ENCODE measurements at regions of chr1 and their contacts with region 1.

Region 1: GRCh38 chr1:31151402-31151801 is 85.9 kb upstream of the PUM1 start:
- DNase-seq: no peak
- ATAC-seq: no peak
- H3K4me3 ChIP-seq: no peak overlapping the region
- H3K4me3 Mint-ChIP-seq: no peak overlapping the region
- H3K27ac ChIP-seq: no peak overlapping the region
- H3K27ac Mint-ChIP-seq: no peak overlapping the region
- H3K4me1 ChIP-seq: peaks cover 5 to 15% of the 10 kb centered on the region in 2 experiments
- H3K4me1 Mint-ChIP-seq: peaks cover 7 to 13% (median 12%) of the 10 kb centered on the region in 3 donors
- H3K27me3 ChIP-seq: no peaks in the 10 kb centered on the region
- H3K27me3 Mint-ChIP-seq: no peaks in the 10 kb centered on the region

Region 2: GRCh38 chr1:31027693-31028526 is 123.5 kb before region 1 on chr1:
- CTCF ChIA-PET with region 1: no interaction called
- POLR2A ChIA-PET with region 1: interaction called in 1 of 2 experiments, 11 read pairs
- DNase-seq: no peak
- ATAC-seq: no peak
- H3K4me3 ChIP-seq: no peak overlapping the region
- H3K4me3 Mint-ChIP-seq: no peak overlapping the region
- H3K27ac ChIP-seq: no peak overlapping the region
- H3K27ac Mint-ChIP-seq: peak overlapping the region in 1 of 2 donors; percentile 46
- H3K4me1 ChIP-seq: peaks cover 8 to 25% of the 10 kb centered on the region in 2 experiments
- H3K4me1 Mint-ChIP-seq: peaks cover 79 to 83% (median 83%) of the 10 kb centered on the region in 3 donors
- H3K27me3 ChIP-seq: no peaks in the 10 kb centered on the region
- H3K27me3 Mint-ChIP-seq: no peaks in the 10 kb centered on the region

Region 3: DNA sequence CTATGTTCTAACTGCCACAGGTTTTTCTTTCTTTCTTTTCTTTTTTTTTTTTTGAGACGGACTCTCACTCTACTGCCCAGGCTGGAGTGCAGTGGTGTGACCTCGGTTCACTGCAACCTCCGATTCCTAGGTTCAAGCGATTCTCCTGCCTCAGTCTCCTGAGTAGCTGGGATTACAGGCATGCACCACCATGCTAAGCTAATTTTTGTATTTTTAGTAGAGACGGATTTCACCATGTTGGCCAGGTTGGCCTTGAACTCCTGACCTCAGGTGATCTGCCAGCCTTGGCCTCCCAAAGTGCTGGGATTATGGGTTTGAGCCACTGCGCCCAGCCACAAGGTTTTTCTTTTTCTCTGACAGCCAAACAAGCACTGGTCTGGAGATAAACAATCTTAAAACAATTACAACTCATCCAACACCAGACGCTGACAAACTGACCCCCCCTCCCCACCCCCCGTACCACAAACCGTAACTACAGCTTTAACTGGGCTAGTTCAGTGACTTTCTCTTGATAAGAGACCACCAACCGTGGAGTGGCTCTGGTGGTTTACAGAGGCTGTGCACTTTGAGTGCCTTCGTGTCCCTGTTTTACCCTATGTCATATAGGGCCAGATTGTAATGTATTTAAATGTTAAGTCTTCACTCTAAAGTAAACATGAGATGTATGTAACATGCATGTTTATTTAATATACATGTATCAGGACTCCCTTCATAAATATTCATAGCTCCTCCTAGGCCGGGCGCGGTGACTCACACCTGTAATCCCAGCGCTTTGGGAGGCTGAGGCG is 66.4 kb before region 1 on chr1:
- CTCF ChIA-PET with region 1: no interaction called
- POLR2A ChIA-PET with region 1: no interaction called
- DNase-seq: no peak
- ATAC-seq: no peak
- H3K4me3 ChIP-seq: no peak overlapping the region
- H3K4me3 Mint-ChIP-seq: no peak overlapping the region
- H3K27ac ChIP-seq: no peak overlapping the region
- H3K27ac Mint-ChIP-seq: no peak overlapping the region
- H3K4me1 ChIP-seq: no peaks in the 10 kb centered on the region
- H3K4me1 Mint-ChIP-seq: no peaks in the 10 kb centered on the region
- H3K27me3 ChIP-seq: peaks cover 0 to 5% of the 10 kb centered on the region in 2 experiments
- H3K27me3 Mint-ChIP-seq: no peaks in the 10 kb centered on the region

Region 4: DNA sequence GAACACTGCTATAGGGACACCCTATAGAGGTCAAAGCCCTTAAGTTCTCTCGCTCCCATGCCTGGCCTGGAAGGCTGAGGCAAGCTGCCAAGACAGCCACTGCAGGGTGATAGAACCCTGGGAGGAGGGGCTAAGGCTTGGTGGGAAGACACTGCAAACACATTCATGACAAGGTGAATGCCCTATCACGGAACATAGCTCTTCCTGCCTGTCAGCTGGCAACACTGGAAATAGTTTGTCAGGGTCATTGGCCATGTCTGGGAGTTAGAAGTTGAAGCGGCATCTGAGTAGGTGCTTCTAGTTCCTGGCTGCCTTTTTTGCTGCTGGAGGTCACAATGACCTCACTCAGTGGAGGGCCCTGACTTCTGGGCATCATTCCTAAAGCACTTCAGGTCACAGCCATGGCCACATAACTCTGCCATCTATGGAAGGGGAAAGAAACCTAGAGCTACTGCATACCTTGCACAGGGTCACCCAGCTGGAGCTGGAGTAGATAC is 217.3 kb after region 1 on chr1:
- CTCF ChIA-PET with region 1: no interaction called
- POLR2A ChIA-PET with region 1: no interaction called
- DNase-seq: no peak
- ATAC-seq: no peak
- H3K4me3 ChIP-seq: no peak overlapping the region
- H3K4me3 Mint-ChIP-seq: no peak overlapping the region
- H3K27ac ChIP-seq: no peak overlapping the region
- H3K27ac Mint-ChIP-seq: no peak overlapping the region
- H3K4me1 ChIP-seq: peaks cover 0 to 11% of the 10 kb centered on the region in 2 experiments
- H3K4me1 Mint-ChIP-seq: peaks cover 10 to 15% (median 14%) of the 10 kb centered on the region in 3 donors
- H3K27me3 ChIP-seq: peaks cover 0 to 11% of the 10 kb centered on the region in 2 experiments
- H3K27me3 Mint-ChIP-seq: peaks cover 0 to 2% of the 10 kb centered on the region in 2 donors

Region 5: DNA sequence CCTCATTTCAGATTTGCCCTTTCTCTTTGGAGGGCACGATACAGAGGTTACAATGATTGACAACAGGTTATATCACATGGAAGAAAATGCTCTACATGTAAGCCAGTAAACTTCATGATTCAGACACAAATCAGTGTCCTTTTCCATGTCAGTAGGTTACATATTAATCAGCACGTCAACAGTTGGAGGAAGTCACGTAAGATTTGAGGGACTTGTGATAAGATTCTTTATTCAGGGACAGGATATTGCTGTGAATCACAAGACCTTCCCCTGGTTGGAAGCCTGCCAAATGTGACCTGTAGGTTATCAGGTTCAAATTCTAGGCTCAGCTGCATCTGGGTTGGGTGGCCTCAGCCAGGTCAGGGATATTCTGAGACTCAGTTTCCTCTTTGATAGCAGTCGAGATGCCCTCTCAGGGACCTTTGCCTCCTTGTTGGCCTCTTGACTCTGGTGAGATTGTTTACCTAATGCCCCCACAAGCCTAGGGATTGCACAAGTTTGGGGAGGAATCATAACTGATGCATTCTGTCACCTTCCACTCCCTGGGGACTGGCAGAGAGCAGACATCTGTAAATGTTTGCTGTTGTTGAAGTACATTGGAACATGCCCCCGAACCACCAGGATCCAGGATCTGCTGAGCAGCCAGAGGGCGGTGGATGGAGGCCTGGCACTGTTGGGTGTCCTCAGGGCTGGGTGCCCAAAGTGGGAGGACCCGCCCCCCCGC is 293.5 kb after region 1 on chr1:
- CTCF ChIA-PET with region 1: no interaction called
- POLR2A ChIA-PET with region 1: no interaction called
- DNase-seq: no peak
- ATAC-seq: no peak
- H3K4me3 ChIP-seq: no peak overlapping the region
- H3K4me3 Mint-ChIP-seq: no peak overlapping the region
- H3K27ac ChIP-seq: no peak overlapping the region
- H3K27ac Mint-ChIP-seq: no peak overlapping the region
- H3K4me1 ChIP-seq: no peaks in the 10 kb centered on the region
- H3K4me1 Mint-ChIP-seq: no peaks in the 10 kb centered on the region
- H3K27me3 ChIP-seq: peaks cover 0 to 5% of the 10 kb centered on the region in 2 experiments
- H3K27me3 Mint-ChIP-seq: peaks cover 4 to 5% of the 10 kb centered on the region in 2 donors

Measured in T-cell (primary cell).